Activated naive CD4-positive, alpha-beta T cell treated with anti-CD3 and anti-CD28 coated beads for 36 hours (primary cell): ENCODE measurements at regions of chr10 and their contacts with region 1.

Region 1: GRCh38 chr10:96043033-96043932 is at the start of gene CCNJ:
- DNase-seq: peak; percentile 85
- H3K4me3 Mint-ChIP-seq: peak within 1 kb of the TSS; percentile 88
- H3K27ac Mint-ChIP-seq: peak within 1 kb of the TSS; percentile 71
- H3K4me1 Mint-ChIP-seq: peaks cover 35% of the 10 kb centered on the region
- H3K27me3 Mint-ChIP-seq: peaks cover 4% of the 10 kb centered on the region
- total RNA-seq, gene CCNJ: 3.2 to 3.6 TPM

Region 2: GRCh38 chr10:96061232-96061631 is 17.9 kb after region 1 on chr10:
- CTCF ChIA-PET with region 1: no interaction called
- intact Hi-C with region 1: loop called (anchors 2 kb)
- DNase-seq: no peak
- H3K4me3 Mint-ChIP-seq: no peak overlapping the region
- H3K27ac Mint-ChIP-seq: no peak overlapping the region
- H3K4me1 Mint-ChIP-seq: peaks cover 16% of the 10 kb centered on the region
- H3K27me3 Mint-ChIP-seq: no peaks in the 10 kb centered on the region

Region 3: GRCh38 chr10:96089670-96090462 is 46.6 kb after region 1 on chr10:
- CTCF ChIA-PET with region 1: no interaction called
- intact Hi-C with region 1: loop called (anchors 1 kb)
- DNase-seq: peak; percentile 95
- H3K4me3 Mint-ChIP-seq: peak overlapping the region; percentile 92
- H3K27ac Mint-ChIP-seq: peak overlapping the region; percentile 98
- H3K4me1 Mint-ChIP-seq: peaks cover 5% of the 10 kb centered on the region
- H3K27me3 Mint-ChIP-seq: peaks cover 13% of the 10 kb centered on the region

Region 4: GRCh38 chr10:96129387-96130325 is 86.4 kb after region 1 on chr10 and contains the start of gene ZNF518A:
- CTCF ChIA-PET with region 1: no interaction called
- intact Hi-C with region 1: loop called (anchors 1 kb)
- DNase-seq: peak; percentile 91
- H3K4me3 Mint-ChIP-seq: peak within 1 kb of the TSS; percentile 97
- H3K27ac Mint-ChIP-seq: peak within 1 kb of the TSS; percentile 99
- H3K4me1 Mint-ChIP-seq: peaks cover 13% of the 10 kb centered on the region
- H3K27me3 Mint-ChIP-seq: peaks cover 30% of the 10 kb centered on the region
- total RNA-seq, gene ZNF518A: 10.7 to 12.1 TPM

Region 5: GRCh38 chr10:96292971-96293920 is 250.0 kb after region 1 on chr10:
- CTCF ChIA-PET with region 1: no interaction called
- intact Hi-C with region 1: loop called (anchors 10 kb)
- DNase-seq: peak; percentile 31
- H3K4me3 Mint-ChIP-seq: no peak overlapping the region
- H3K27ac Mint-ChIP-seq: no peak overlapping the region
- H3K4me1 Mint-ChIP-seq: peaks cover 17% of the 10 kb centered on the region
- H3K27me3 Mint-ChIP-seq: no peaks in the 10 kb centered on the region

Region 6: DNA sequence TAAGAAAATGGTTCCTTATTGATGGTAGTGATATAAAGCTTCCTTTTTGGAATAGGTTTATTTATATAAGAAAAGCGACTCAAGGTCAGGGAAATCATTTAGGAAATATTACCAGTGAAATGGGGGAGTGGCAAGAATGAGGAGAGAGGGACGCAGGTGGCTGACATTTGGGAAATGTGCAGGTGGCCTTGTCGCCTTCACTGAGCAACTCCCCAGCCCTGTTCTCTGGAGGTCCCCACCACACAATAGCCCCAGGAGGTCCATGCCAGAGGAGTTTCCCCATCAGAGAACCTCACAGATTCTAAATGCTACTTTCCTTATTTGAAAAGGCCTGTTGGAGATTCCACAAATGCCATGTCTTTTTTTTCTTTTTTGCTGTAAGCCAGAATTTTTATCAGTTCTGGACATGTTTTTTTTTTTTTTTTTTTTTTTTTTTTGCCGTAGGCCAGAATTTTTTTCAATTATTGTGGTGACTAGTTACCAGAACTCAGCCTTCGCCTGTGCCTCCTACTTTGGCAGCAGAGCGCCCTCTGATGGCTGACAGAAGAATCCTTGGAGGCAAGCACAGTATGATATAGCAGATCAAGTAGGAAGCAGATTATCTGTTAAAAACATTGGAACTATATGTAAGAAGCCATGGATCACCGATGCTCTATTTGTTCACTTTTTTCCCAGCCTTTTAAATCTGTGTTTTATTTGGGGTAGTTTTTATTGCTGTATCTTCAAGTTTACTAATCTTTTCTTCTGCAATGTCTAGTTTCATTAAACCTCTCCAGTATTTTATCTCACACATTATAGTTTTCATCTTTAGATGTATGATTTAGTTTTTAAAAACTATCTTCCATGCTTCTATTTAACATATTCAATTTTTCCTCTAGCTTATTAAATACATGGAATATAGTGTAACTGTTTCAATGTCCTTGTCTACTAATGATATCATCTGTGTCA is 296.9 kb after region 1 on chr10:
- CTCF ChIA-PET with region 1: no interaction called
- intact Hi-C with region 1: loop called (anchors 10 kb)
- DNase-seq: peak; percentile 83
- H3K4me3 Mint-ChIP-seq: no peak overlapping the region
- H3K27ac Mint-ChIP-seq: no peak overlapping the region
- H3K4me1 Mint-ChIP-seq: peaks cover 6% of the 10 kb centered on the region
- H3K27me3 Mint-ChIP-seq: no peaks in the 10 kb centered on the region